ENCODE measurements at regions of chr2 and their contacts with region 1.

Region 1: DNA sequence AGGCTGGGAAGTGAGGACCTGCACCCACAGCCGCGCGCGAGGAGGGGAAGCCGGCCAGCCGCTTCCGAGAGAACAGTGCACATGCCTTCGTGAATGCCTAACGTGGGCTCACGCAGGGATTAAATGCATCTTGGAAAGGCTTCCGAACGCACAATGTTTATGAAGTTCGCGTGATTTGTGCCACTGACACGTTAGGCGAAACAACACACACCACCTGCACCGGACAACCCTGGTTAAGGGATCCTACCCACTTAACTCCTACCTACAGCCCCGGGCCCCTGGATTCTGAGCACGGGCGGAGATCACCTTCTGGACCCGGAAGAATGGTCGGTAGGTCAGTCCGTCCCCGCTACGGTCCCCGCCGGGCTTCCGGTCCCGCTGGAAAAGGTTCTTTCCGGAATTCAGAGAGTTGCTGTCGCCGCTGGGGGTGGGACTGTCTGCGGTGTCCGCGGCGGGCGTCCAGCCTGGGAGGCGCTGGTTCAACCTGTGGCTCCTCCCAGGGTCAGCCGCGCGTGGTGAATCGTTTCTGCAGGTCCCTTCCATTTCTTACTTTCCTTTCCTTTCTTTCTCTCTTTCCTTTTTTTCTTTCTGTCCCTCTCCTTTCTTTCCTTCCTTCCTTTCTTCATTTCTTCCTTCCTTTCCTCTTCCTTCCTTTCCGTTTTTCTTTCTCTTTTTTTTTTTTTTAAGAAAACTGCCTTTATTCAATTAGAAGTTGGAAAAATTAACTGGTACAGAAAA is at the start of gene MTIF2:
- DNase-seq: peak; percentile 97
- H3K4me3 ChIP-seq: peak within 1 kb of the TSS; percentile 39 to 76 (median 58)
- H3K27ac ChIP-seq: peak within 1 kb of the TSS; percentile 84 to 91 (median 89)
- H3K4me1 ChIP-seq: peaks cover 7 to 22% (median 14%) of the 10 kb centered on the region in 4 donors
- H3K27me3 ChIP-seq: no peaks in the 10 kb centered on the region
- CTCF ChIP-seq: peak in 1 of 5 experiments; percentile 18
- EP300 ChIP-seq: no peak
- POLR2A ChIP-seq: peak; percentile 87
- total RNA-seq, gene MTIF2: 22.7 to 34.4 (median 33.5) TPM

Region 2: DNA sequence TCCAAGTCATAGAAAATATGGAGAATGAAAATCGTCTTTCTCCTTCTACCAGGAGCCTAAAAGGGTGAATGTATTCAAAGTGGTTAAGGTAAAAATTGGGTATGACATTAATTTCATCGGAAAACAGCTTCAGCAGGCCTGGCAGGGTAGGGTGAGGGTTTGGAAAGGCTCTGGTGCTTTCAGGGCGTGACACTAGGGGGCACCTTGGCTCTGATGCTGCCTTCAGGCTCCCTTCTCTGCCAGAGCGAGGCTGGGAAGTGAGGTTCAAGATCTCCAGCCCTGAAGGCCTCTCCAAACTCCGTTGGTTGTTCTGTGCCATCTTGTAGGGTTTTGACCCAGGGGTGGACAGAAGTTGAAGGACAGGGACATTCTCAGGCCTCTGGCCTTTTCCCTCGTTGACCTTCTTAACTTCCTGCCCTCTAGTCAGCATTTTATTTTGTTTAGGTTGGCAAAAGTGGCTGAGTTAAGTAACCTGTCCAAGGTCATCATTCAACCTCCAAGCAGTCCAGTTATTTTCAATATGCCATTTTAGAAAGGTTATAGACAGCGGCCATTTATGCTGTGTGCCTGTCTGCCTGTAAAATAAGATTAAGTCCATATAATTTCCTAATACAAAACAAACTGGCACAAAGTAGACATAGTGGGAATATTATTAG is 505.3 kb before region 1 on chr2:
- in situ Hi-C with region 1: no loop called
- intact Hi-C with region 1: no loop called
- DNase-seq: no peak
- H3K4me3 ChIP-seq: no peak overlapping the region
- H3K27ac ChIP-seq: no peak overlapping the region
- H3K4me1 ChIP-seq: no peaks in the 10 kb centered on the region
- H3K27me3 ChIP-seq: no peaks in the 10 kb centered on the region
- CTCF ChIP-seq: peak in 2 of 5 experiments; percentile 13 to 14
- EP300 ChIP-seq: no peak
- POLR2A ChIP-seq: no peak

Region 3: GRCh38 chr2:55431982-55432627 is 163.0 kb after region 1 on chr2:
- in situ Hi-C with region 1: loop called in 1 of 4 experiments (anchors 25 kb)
- intact Hi-C with region 1: no loop called
- DNase-seq: no peak
- H3K4me3 ChIP-seq: no peak overlapping the region
- H3K27ac ChIP-seq: no peak overlapping the region
- H3K4me1 ChIP-seq: peaks cover 0 to 5% (median 4%) of the 10 kb centered on the region in 4 donors
- H3K27me3 ChIP-seq: no peaks in the 10 kb centered on the region
- CTCF ChIP-seq: peak; percentile 49 to 59 (median 53)
- EP300 ChIP-seq: no peak
- POLR2A ChIP-seq: no peak